ENCODE measurements at regions of chr12 and their contacts with region 1.

Region 1: DNA sequence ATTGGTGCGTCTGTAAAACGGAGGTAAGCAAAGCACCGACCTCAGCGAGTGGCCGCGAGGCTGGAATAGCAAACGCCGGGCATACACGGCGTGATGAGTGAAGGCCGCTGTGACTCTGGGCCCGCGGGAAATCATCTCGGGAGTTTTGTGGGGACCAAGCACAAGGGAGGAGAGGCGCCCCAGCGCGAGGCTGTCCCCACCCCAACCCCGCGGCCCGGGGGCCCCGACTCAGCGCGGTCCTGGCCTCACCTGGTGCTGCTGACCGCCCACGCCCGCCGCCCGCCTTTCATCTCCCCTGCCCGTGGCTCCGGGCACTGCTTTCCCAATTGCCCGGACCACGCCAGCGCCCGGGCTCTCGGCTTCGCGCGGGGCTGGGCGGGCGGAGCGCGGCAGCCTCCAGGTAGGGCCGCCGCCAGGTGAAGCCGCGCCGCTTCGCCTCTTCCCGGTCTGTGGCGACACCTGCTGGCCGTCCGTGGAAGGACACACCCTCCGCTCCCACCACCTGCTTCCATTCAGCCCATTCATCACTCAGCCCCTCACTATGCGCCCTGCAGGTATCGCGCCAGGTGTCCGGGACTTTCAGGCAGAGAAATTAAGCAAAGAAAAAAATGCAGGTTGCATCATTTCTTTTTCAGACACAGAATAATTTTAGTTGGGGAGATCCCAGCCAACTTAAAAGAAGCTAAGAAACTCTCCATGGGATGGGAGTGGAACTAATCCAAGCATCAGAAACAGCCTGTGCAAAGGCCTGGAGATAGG is 360.4 kb downstream of the MED13L start:
- DNase-seq: peak in 9 of 10 donors; percentile 34 to 77 (median 49)
- H3K4me3 ChIP-seq: peak overlapping the region in 39 of 59 donors; percentile 4 to 55 (median 30)
- H3K27ac ChIP-seq: no peak overlapping the region
- H3K27me3 ChIP-seq: peaks cover 0 to 76% (median 39%) of the 10 kb centered on the region in 45 donors
- CTCF ChIP-seq: peak; percentile 85 to 99 (median 96)

Region 2: DNA sequence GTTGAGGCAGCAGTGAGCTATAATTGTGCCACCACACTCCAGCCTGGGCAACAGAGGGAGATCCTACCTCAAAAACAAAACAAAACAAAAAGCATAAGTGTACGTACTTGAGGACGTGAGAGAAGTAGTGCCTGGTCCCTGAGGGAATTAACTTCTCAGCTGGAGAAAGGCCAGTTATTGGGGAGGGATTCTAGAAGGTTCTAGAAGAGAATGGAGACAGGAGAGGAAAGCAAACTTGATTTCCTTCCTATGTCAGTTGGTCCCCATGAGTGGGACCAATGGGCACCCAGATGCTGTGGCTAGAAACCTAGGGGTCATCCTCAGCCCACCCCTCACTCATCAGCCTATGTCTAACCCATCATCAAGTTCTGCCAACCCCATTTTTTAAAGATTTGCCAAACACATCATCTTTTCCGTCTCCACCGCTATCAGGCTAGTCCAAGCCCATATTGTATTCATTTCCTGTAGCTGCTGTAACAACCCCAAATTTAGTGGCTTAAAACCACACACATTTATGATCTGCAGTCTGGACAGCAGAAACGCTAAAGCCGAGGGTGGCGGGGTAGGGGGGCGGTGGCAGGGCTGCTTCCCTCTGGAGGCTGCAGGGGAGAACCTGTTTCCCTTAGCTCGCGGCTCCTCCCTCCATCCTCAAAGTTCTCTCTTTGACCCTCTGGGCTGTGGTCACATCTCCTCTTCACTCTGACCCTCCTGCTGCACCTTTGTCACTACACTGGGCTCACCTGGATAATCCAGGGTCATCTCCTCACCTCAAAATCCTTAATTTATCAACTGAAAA is 1943.8 kb before region 1 on chr12:
- intact Hi-C with region 1: loop called in 1 of 2 experiments (anchors 10 kb)
- DNase-seq: no peak
- H3K4me3 ChIP-seq: no peak overlapping the region
- H3K27ac ChIP-seq: no peak overlapping the region
- H3K27me3 ChIP-seq: peaks cover 0 to 32% (median 8%) of the 10 kb centered on the region in 45 donors
- CTCF ChIP-seq: no peak

Region 3: DNA sequence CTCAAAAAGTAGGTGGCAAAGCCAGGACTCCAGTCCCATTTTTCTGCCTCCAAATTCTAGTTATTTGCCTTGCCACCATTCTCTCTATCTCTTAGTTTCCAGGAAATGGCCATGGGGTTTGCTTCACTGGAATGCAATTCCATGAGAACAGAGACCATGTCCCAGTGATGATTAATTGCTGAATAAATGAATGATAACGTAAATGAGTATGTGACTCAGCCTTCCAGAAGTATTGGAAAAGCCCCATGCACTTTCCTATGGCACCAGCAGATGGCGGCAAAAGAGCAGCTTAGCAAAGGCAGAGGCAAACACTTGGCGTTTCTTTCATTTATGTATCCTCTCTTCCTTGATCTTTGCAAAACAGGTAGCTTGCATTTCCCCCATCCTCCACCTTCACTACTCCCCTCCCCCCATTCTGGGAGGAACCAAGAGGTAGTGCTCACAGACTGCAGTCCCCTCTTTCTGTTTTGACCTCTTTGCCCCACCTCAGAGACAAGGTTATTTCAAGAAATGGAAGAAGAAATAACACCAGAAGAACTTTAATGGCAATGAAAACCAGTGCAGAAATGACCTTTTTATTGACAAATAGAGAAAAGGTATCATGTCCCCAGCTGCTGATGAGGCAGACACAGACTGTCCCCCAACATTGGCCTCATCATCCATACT is 1254.4 kb before region 1 on chr12:
- intact Hi-C with region 1: loop called (anchors 2 to 5 kb)
- DNase-seq: peak; percentile 65 to 88 (median 80)
- H3K4me3 ChIP-seq: no peak overlapping the region
- H3K27ac ChIP-seq: no peak overlapping the region
- H3K27me3 ChIP-seq: peaks cover 6 to 89% (median 53%) of the 10 kb centered on the region in 45 donors
- CTCF ChIP-seq: peak; percentile 73 to 99 (median 97)

Region 4: DNA sequence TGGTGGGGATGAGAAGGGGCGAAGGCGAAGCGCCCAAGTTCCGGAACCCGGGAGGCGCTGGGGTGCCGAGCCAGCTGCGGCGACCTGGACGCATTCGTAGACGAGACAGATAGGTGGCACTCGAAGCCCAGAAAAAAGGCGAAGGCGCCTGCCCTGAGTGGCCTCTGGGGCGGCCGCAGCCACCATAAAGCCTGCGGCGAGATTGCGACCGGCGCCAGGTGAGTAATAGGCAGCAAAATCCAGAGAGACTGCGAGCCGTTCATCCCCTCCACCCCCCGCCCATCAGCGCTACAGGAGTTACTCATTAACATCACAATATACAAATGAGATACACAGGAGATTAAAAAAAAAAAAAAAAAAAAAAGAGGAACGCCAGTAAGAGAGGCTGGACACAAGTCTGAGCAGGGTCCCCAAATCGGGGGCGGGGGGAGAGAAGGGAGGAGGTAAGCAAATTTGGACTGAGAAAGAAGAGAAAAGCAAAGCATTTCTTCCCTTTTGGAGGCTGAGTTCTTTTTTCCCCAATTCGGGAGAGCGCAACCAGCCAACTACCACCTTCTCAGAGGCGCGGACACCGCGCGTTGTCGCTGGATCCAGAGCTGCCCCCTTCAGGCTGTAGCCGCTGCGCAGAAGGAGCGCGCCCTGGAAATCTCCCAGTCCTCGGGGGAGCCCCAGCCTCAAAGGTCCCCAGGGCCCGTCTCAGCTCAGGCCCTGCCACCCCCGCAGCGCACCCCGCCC is 1248.8 kb before region 1 on chr12:
- intact Hi-C with region 1: loop called (anchors 2 to 5 kb)
- DNase-seq: peak in 9 of 10 donors; percentile 17 to 75 (median 50)
- H3K4me3 ChIP-seq: peak overlapping the region in 49 of 59 donors; percentile 3 to 56 (median 34)
- H3K27ac ChIP-seq: peak overlapping the region in 7 of 59 donors; percentile 13 to 73 (median 29)
- H3K27me3 ChIP-seq: peaks cover 10 to 100% (median 98%) of the 10 kb centered on the region in 45 donors
- CTCF ChIP-seq: peak; percentile 32 to 83 (median 68)

Region 5: GRCh38 chr12:115752913-115753726 is 164.0 kb before region 1 on chr12:
- intact Hi-C with region 1: loop called in 1 of 2 experiments (anchors 5 kb)
- DNase-seq: peak in 6 of 10 donors; percentile 4 to 51 (median 27)
- H3K4me3 ChIP-seq: no peak overlapping the region
- H3K27ac ChIP-seq: no peak overlapping the region
- H3K27me3 ChIP-seq: peaks cover 0 to 80% (median 52%) of the 10 kb centered on the region in 45 donors
- CTCF ChIP-seq: peak; percentile 20 to 94 (median 77)

Region 6: DNA sequence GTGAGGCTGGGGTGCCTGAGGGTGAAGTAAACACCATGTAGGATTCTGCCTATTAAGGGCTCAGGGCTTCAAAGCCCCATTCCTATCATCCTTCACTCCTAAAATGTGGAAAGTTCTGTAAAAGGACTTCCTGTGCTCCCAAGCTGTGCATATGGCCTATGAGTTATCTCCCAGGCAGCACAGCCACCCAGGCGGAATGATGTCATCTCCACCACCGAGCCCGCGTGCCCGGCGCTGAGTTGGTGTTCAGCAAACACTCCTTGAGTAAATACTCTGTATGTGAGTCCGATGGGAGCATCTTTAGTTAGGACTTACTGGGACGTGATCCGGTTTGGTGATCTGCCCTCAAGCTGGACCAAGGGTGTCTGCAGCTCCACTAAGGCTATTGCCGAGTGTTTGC is 76.9 kb before region 1 on chr12:
- intact Hi-C with region 1: no loop called
- DNase-seq: no peak
- H3K4me3 ChIP-seq: no peak overlapping the region
- H3K27ac ChIP-seq: no peak overlapping the region
- H3K27me3 ChIP-seq: peaks cover 0 to 11% (median 0%) of the 10 kb centered on the region in 45 donors
- CTCF ChIP-seq: no peak

Region 7: GRCh38 chr12:115857160-115857922 is 59.7 kb before region 1 on chr12:
- intact Hi-C with region 1: no loop called
- DNase-seq: no peak
- H3K4me3 ChIP-seq: no peak overlapping the region
- H3K27ac ChIP-seq: no peak overlapping the region
- H3K27me3 ChIP-seq: peaks cover 0 to 33% (median 7%) of the 10 kb centered on the region in 45 donors
- CTCF ChIP-seq: no peak

Region 8: GRCh38 chr12:116434155-116435011 is 517.3 kb after region 1 on chr12:
- intact Hi-C with region 1: no loop called
- DNase-seq: peak in 5 of 10 donors; percentile 16 to 53 (median 35)
- H3K4me3 ChIP-seq: peak overlapping the region in 12 of 59 donors; percentile 2 to 31 (median 12)
- H3K27ac ChIP-seq: peak overlapping the region in 4 of 59 donors; percentile 3 to 40 (median 28)
- H3K27me3 ChIP-seq: peaks cover 0 to 9% (median 0%) of the 10 kb centered on the region in 45 donors
- CTCF ChIP-seq: no peak

Measured in dorsolateral prefrontal cortex (tissue), 120 donors.